RWPE1 (cell line): ENCODE measurements at regions of chr3 and their contacts with region 1.

Region 1: DNA sequence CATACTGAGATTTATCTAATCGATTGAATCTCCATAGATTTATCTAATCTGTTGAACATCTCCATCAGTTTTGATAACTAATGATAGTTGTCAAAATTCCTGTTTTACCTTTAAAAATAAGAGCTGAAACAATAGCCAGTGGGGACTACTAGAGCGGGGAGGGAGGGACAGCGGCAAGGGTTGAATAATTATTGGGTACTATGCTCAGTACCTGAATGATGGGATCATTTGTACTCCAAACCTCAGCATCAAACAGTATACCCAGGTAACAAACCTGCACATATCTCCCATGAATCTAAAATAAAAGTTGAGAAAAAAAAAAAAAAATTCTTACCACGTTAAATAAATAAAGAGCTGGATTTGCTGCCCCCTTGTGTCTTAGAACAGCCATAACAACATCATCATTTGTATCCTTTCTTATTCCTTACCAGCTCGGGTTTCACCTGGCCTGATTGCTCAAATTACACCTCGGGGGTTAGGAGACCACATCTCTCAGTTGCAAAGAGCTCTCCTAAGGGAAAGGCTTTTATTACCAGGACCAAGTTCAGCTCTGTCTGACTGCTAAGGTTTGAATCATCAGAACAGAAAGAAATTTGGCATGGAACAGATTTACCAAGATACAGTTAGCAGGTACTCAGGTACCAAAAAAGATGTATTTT is 25.7 kb upstream of the RPL39L start:
- DNase-seq: peak; percentile 59
- H3K27ac ChIP-seq: no peak overlapping the region
- CTCF ChIP-seq: peak; percentile 83

Region 2: GRCh38 chr3:186849374-186849975 is 315.5 kb before region 1 on chr3:
- CTCF ChIA-PET with region 1: interaction called, 16 read pairs
- POLR2A ChIA-PET with region 1: no interaction called
- DNase-seq: peak; percentile 55
- H3K27ac ChIP-seq: no peak overlapping the region
- CTCF ChIP-seq: peak; percentile 45

Region 3: GRCh38 chr3:187112934-187113793 is 51.9 kb before region 1 on chr3:
- CTCF ChIA-PET with region 1: interaction called, 30 read pairs
- POLR2A ChIA-PET with region 1: no interaction called
- DNase-seq: peak; percentile 20
- H3K27ac ChIP-seq: no peak overlapping the region
- CTCF ChIP-seq: peak; percentile 69

Region 4: DNA sequence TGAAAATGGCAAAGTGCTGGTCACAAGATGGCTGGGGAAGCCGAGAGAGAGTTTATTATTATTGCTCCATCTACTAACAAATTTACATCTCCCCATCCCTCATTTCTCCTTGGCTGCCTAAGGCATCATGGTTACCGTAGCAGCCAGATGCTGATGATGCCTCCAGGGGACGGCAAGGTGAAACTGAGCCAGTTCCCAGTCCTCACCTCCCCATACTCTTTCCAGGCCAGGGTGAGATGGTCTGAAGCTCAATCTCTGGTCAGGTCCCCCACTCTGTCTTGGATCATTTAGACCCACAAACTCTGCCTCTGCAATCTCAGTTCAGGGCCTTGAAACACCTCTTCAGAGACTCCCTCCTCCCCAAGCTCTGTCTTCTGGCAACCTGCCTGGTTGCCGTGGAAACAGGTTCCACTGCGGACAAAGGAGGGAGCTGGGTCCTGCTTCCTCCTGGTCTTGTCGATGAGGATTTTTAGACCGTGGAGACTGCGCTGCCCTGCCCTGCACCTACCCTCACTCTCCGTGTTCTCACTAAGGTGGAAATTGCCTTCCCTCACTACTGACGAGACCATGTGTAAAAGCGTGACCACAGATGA is 32.1 kb after region 1 on chr3 and contains the start of gene RTP1:
- CTCF ChIA-PET with region 1: no interaction called
- POLR2A ChIA-PET with region 1: no interaction called
- DNase-seq: no peak
- H3K27ac ChIP-seq: 0 out of 2 replicates have a peak within 1 kb of the TSS, but pooled peaks have one; percentile 14
- CTCF ChIP-seq: no peak

Region 5: DNA sequence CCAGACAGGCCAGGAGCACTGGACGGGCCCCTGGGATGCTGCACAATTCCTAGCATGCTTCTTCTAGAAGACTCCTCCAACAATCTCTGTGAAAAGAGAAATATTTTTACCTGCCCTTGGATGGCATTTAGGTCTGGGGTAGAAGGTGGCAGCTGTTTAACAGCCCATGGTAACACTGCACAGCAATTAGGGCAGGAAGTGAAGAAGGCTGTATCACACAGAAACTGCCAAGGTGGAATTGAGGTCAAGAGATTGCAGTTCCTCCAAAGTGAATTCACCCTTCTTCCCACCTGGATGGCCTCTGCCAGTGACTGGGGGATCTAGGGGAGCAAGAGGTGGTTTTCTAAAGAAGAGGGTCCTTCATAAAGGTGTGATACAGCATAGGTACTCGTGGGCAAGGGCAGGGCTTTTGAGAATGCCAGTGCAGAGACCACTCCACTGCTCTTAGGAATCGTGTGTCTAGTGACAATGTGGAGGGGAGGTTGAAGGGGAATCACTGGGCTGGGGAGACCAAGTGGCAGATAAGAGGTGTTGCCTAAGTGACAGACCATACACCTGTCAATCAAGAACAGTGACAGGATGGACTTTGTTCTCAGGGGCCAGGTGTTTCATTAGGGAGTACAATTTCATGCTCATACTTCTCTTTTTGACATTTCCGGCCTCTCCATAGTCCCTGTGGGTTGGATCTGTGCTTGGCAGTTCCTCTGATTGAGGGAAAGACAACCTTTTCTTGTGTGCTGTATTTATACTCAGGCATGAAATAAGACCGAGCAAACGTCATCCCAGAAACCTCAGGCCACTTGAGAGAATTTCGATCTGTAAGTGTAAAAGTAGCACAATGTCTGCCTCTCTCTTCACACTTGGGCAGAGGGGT is 663.8 kb after region 1 on chr3:
- CTCF ChIA-PET with region 1: no interaction called
- POLR2A ChIA-PET with region 1: no interaction called
- DNase-seq: no peak
- H3K27ac ChIP-seq: no peak overlapping the region
- CTCF ChIP-seq: no peak